Mammary epithelial cell (primary cell): ENCODE measurements at regions of chr16 and their contacts with region 1.

Region 1: DNA sequence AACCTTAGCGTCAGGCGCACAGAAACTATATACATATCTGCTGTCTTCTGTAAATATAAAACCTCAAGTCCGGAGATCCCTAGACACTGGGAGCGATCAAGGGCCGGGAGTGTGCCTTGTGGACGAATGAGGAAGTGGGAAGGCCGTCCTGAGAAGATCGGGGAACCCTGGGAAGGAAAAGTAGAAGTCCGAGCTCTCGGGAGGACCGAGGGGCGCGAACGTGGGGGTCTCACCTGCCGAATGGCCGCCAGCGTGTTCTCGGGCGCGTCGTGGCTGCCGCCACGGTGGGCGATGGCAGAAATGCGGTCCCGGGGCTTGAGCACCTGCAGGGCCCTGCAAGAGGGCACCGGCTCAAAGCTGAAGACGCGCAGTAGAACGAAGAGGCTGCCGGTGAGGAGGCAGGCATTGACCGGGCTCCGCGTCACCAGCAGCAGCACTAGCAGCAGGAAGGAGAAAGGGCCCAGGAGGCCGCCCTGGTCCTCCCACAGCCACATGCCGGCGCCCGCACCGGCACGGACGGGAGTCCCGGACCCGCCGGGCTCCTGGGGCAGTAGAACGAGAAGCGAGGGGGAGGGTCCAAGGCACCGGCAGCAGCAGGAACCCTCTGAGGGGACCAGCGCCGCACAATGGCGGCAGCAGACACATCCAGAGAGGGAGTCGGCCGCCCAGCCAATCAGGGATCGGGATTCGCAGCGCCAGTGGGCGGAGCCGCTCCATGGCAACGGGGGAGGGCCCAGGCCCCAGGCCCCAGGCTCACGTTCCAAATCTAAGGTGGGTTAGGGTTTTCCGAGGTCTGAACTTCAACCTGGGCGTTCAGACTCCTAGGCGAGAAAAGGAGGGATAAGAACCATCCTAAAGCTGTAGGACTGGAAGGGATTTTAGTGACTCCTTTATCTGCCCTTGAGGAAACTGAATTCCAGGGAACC is at the start of gene GDE1:
- DNase-seq: peak; percentile 85
- H3K4me3 ChIP-seq: peak within 1 kb of the TSS; percentile 80 to 83 (median 83)
- H3K27ac ChIP-seq: peak within 1 kb of the TSS; percentile 65
- H3K4me1 ChIP-seq: peaks cover 40% of the 10 kb centered on the region
- H3K27me3 ChIP-seq: no peaks in the 10 kb centered on the region
- CTCF ChIP-seq: peak in 1 of 2 donors; percentile 52
- total RNA-seq, gene GDE1: 48.4 to 61.2 TPM

Region 2: DNA sequence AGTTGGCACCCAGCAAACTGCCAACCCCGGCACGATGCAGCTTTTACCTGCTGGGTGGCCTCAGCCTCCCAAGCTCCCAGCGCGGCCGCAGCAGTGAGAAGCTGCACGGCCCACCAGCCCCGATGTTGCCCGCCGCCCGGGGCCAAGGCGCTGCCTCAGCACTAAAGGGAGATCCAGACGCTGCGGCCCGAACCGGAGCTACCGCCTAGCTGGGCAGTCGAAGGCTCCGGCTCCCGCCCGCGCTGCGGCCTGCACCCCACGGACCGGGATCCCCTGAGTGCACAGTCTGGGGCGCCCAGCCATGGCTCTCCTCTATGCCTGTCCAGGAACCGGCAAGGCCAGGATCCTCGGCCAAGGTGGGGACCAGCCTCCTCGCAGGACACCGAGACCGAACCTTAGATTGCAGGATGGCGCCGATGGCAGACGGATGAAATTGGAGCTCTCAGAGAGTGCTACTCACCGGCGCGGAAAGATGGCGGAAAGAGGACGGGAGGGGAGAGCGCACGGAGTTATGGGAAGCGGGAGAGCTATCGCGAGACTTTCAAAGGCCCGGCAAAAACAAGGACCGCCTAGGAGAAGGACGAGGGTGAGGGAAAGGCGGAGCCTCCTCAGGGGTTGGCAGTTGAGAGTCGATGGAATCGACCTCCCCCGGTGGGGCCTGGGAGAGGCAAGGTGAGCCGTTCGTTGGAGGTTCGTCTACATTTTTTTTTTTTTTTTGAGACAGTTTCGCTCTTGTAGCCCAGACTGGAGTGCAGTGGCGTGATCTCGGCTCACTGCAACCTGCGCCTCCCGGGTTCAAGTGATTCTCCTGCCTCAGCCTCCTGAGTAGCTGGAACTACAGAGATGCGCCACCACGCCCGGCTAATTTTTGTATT is 731.6 kb before region 1 on chr16 and contains the start of gene RPS15A:
- CTCF ChIA-PET with region 1: no interaction called
- dilution Hi-C with region 1: no loop called
- in situ Hi-C with region 1: loop called in 1 of 2 experiments (anchors 10 kb)
- intact Hi-C with region 1: no loop called
- DNase-seq: peak; percentile 96
- H3K4me3 ChIP-seq: peak within 1 kb of the TSS; percentile 80 to 98 (median 92)
- H3K27ac ChIP-seq: peak within 1 kb of the TSS; percentile 85
- H3K4me1 ChIP-seq: peaks cover 40% of the 10 kb centered on the region
- H3K27me3 ChIP-seq: no peaks in the 10 kb centered on the region
- CTCF ChIP-seq: no peak
- total RNA-seq, gene RPS15A: 682 to 1,206 TPM

Region 3: GRCh38 chr16:18983565-18984424 is 537.9 kb before region 1 on chr16 and contains the start of gene TMC7:
- CTCF ChIA-PET with region 1: no interaction called
- dilution Hi-C with region 1: no loop called
- in situ Hi-C with region 1: loop called in 1 of 2 experiments (anchors 25 kb)
- intact Hi-C with region 1: no loop called
- DNase-seq: peak; percentile 83
- H3K4me3 ChIP-seq: peak within 1 kb of the TSS; percentile 56 to 82 (median 76)
- H3K27ac ChIP-seq: peak within 1 kb of the TSS; percentile 75
- H3K4me1 ChIP-seq: peaks cover 6% of the 10 kb centered on the region
- H3K27me3 ChIP-seq: no peaks in the 10 kb centered on the region
- CTCF ChIP-seq: peak; percentile 57 to 96
- total RNA-seq, gene TMC7: 13.7 to 17.5 TPM

Region 4: DNA sequence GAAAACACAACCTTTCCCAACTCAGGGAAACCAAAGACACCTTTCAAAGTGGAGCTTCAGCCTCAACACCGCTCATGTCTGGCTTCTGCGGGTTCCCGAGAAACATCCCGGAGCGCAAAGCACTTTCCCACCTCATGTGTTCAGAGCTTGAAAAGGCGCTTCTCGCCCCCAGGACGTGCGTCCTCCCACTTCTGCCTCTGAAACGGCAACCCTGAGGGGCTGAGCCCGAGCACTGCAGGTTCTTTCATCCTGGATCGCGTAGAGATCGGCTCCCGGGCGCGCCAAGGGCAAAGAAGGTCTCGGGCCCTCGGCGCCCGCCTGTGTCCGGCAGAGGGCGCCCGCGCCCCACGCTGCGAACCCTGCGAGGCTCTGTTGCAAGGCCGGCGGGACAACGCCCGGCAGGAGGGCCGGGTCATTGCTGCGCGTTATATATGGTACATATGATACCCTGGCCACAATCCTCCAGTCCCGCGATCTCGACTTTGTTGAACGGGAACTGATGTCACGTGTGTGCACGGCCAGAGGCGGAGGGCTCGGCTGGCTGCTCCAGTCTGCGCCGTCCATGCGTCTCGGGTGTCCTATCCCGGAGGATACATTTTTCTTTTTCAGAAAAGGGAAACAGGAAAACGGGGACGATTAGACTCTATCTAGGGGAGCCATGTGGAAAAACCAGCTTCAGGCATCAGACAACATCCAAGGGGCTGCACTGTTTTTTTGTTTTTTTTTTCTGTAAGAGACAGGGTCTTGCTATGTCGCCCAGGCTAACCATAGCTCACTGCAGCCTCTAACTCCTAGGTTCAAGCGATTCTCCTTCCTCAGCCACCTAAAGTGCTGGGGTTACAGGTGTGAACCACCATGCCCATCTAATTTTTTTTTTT is 435.2 kb before region 1 on chr16:
- CTCF ChIA-PET with region 1: no interaction called
- dilution Hi-C with region 1: no loop called
- in situ Hi-C with region 1: loop called in 1 of 2 experiments (anchors 25 kb)
- intact Hi-C with region 1: no loop called
- DNase-seq: peak; percentile 74
- H3K4me3 ChIP-seq: peak overlapping the region; percentile 28 to 48 (median 34)
- H3K27ac ChIP-seq: no peak overlapping the region
- H3K4me1 ChIP-seq: peaks cover 12% of the 10 kb centered on the region
- H3K27me3 ChIP-seq: no peaks in the 10 kb centered on the region
- CTCF ChIP-seq: peak; percentile 73 to 99

Region 5: DNA sequence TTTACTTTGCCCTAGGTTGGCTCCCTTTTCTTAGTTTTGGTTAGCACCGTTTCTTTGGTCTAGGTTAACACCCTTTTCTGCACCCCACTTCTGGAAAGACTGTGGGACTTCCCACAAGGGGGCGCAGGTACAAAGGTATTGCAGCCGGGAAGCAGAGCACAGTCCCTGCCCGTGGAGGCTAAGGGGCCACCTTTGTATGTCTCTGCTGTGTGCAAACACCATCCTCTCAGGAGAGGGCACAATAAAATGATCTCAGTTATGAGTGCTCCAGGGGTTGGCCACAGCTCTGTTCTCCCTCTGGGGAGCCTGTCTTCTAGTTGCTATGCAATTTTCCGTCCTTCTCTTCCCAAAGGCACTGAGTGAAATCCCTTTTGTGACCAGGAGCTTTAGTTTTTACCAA is 132.5 kb before region 1 on chr16:
- CTCF ChIA-PET with region 1: no interaction called
- dilution Hi-C with region 1: loop called (anchors 5 kb)
- in situ Hi-C with region 1: no loop called
- intact Hi-C with region 1: loop called (anchors 5 kb)
- DNase-seq: peak; percentile 44
- H3K4me3 ChIP-seq: no peak overlapping the region
- H3K27ac ChIP-seq: no peak overlapping the region
- H3K4me1 ChIP-seq: peaks cover 20% of the 10 kb centered on the region
- H3K27me3 ChIP-seq: no peaks in the 10 kb centered on the region
- CTCF ChIP-seq: peak; percentile 63 to 90

Region 6: DNA sequence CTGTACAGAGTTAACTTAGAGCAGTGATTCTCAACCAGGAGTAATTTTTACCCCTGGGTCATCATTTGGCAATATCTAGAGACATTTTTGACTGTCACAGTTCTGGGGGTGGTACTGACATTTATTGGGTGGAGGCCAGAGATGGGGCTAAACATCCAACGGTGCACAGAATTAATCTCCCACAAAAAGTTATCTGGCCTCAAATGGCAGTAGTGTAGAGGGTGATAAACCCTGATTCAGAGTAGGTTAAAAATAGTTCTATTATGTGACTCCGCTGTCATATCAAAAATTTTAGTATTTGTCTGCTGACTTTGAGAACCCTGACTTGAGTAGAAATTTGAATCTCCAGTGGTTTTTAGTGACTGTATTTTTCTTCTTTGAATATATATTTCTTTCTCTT is 52.9 kb after region 1 on chr16:
- CTCF ChIA-PET with region 1: no interaction called
- dilution Hi-C with region 1: no loop called
- in situ Hi-C with region 1: no loop called
- intact Hi-C with region 1: no loop called
- DNase-seq: no peak
- H3K4me3 ChIP-seq: no peak overlapping the region
- H3K27ac ChIP-seq: no peak overlapping the region
- H3K4me1 ChIP-seq: no peaks in the 10 kb centered on the region
- H3K27me3 ChIP-seq: no peaks in the 10 kb centered on the region
- CTCF ChIP-seq: no peak